AG04450 (cell line): ENCODE measurements at regions of chr6 and their contacts with region 1.

Region 1: GRCh38 chr6:29649701-29650673 is 6.9 kb upstream of the MOG start:
- DNase-seq: peak; percentile 86
- H3K4me3 ChIP-seq: peak overlapping the region; percentile 66
- H3K27ac ChIP-seq: peak overlapping the region; percentile 43
- H3K27me3 ChIP-seq: peaks cover 3% of the 10 kb centered on the region
- CTCF ChIP-seq: peak; percentile 92

Region 2: DNA sequence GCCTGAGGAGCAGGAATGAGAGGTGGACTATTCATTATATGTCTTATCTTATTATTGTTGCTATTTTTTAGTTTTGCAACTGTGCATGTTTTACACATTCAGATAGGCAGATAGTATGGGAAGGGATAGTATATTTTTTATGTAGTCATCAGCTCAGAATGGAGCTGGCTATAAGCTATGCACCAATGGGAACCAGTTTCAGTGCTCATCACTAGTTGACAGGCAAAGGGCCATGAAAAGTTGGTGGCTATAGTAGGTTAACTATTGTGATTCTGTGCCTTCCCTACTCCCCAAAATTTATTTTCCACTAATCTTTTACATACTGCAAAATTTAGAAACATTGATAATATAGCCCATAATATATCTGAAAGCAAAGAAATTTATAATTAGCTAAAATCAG is 85.1 kb before region 1 on chr6:
- CTCF ChIA-PET with region 1: no interaction called
- POLR2A ChIA-PET with region 1: no interaction called
- DNase-seq: no peak
- H3K4me3 ChIP-seq: no peak overlapping the region
- H3K27ac ChIP-seq: no peak overlapping the region
- H3K27me3 ChIP-seq: no peaks in the 10 kb centered on the region
- CTCF ChIP-seq: no peak

Region 3: DNA sequence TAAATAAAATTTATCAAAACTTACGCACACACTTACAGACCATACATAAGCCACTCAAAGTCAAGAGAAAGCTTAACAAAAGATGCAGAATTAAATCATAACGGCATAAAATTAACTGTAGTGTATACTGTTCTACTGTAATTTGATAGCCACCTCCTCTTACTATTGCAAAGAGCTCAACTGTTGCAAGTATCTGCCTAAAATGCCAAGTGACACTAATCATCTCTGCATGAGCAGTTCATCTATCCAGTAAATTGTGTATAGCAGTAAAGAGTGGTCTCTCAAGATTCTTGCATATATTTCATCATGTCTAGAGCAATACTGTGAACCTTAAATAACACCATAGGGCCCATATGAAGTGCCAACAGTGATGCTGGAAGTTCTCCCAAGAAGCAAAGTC is 52.8 kb before region 1 on chr6:
- CTCF ChIA-PET with region 1: interaction called, 10 read pairs
- POLR2A ChIA-PET with region 1: no interaction called
- DNase-seq: no peak
- H3K4me3 ChIP-seq: no peak overlapping the region
- H3K27ac ChIP-seq: no peak overlapping the region
- H3K27me3 ChIP-seq: no peaks in the 10 kb centered on the region
- CTCF ChIP-seq: no peak

Region 4: GRCh38 chr6:29617782-29618557 is 32.0 kb before region 1 on chr6:
- CTCF ChIA-PET with region 1: interaction called, 281 read pairs
- POLR2A ChIA-PET with region 1: no interaction called
- DNase-seq: no peak
- H3K4me3 ChIP-seq: no peak overlapping the region
- H3K27ac ChIP-seq: no peak overlapping the region
- H3K27me3 ChIP-seq: no peaks in the 10 kb centered on the region
- CTCF ChIP-seq: peak; percentile 2; the same call in 1 of the 2 replicates

Region 5: GRCh38 chr6:29665942-29666825 is 16.2 kb after region 1 on chr6:
- CTCF ChIA-PET with region 1: interaction called, 185 read pairs
- POLR2A ChIA-PET with region 1: no interaction called
- DNase-seq: no peak
- H3K4me3 ChIP-seq: no peak overlapping the region
- H3K27ac ChIP-seq: no peak overlapping the region
- H3K27me3 ChIP-seq: peaks cover 8% of the 10 kb centered on the region
- CTCF ChIP-seq: no peak

Region 6: DNA sequence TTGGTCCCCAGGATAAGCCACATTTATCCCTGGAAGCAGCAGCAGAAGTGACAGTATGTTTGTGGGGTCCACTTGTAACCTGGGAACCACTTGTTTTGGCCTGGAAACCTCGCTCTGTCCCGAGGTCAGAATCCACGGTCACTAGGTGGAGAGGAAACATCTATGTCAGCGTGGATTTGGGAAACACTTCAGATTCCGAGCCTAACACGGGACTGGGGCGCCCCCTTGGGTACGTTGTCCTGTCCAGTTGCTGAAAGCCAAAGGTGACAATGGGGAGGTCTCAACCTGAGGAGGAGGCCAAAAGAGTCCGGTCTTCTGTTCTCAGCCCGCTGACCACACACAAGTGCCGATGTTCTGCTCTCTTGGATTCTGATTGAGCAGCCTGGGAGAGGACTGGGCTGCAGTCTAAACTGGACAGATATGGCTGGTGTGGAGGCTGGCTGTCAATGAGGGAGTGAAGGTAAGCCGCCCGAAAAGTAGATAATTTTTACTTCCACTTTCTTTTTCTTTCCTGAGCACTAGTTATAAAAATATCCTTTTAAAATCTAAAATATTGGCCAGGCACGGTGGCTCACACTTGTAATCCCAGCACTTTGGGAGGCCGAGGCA is 35.8 kb after region 1 on chr6:
- CTCF ChIA-PET with region 1: interaction called, 13 read pairs
- POLR2A ChIA-PET with region 1: no interaction called
- DNase-seq: no peak
- H3K4me3 ChIP-seq: no peak overlapping the region
- H3K27ac ChIP-seq: no peak overlapping the region
- H3K27me3 ChIP-seq: peaks cover 2% of the 10 kb centered on the region
- CTCF ChIP-seq: no peak

Region 7: GRCh38 chr6:29752451-29753308 is 102.7 kb after region 1 on chr6:
- CTCF ChIA-PET with region 1: interaction called, 23 read pairs
- POLR2A ChIA-PET with region 1: no interaction called
- DNase-seq: peak; percentile 50
- H3K4me3 ChIP-seq: peak overlapping the region; percentile 67
- H3K27ac ChIP-seq: peak overlapping the region; percentile 31
- H3K27me3 ChIP-seq: peaks cover 37% of the 10 kb centered on the region
- CTCF ChIP-seq: peak; percentile 95